Activated CD4-positive, alpha-beta T cell treated with anti-CD3 and anti-CD28 coated beads for 36 hours (primary cell): ENCODE measurements at regions of chr22 and their contacts with region 1.

Region 1: DNA sequence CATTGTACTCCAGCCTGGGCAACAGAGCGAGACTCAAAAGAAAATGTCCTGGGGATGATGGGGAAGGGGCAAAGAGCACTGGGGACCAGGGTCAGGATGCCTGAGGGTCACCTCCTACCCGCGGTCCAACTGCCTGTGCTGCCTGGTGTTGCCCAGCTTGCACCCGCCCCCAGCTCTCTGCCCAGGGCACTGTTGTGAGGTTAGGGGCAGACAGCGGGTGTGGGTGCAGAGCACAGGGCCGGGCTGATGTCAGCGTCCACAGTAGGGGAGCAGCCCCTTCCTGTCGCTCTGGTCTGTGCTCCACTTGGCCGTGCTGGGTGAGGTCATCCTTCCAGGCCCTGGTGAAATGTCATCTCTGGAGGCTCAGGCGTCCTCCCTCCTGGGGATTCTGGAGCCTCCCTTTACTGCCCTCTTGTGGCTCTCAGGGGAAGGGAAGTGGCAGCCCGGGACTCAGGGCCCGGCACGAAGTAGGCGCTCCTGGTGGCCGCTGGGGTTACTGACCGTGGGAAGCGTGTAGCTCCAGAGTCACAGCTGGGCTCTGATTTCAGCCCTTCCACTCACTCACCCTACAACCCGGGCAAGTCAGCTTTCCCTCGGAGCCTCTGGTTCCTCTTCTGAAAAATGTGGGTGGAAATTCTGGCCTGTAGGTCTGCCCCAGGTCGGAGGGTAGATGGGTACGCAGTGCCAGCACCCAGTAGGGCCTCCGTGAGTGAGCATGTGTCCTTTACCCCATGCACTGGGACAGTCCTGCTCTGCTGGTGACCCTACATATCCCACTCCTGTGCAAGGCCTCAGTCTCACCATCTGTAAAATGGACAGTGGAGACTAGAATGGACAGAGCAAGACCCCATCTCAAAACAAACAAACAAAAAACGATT is 17.3 kb upstream of the PRR5 start:
- DNase-seq: peak; percentile 94
- ATAC-seq: peak; percentile 81
- H3K4me3 Mint-ChIP-seq: peak overlapping the region; percentile 15
- H3K27ac Mint-ChIP-seq: peak overlapping the region; percentile 87
- H3K4me1 Mint-ChIP-seq: peaks cover 52% of the 10 kb centered on the region
- H3K27me3 Mint-ChIP-seq: no peaks in the 10 kb centered on the region

Region 2: GRCh38 chr22:44180706-44181032 is 504.1 kb before region 1 on chr22 and contains the start of gene PARVG:
- CTCF ChIA-PET with region 1: no interaction called
- POLR2A ChIA-PET with region 1: no interaction called
- intact Hi-C with region 1: loop called in 1 of 2 experiments (anchors 5 kb)
- DNase-seq: peak; percentile 51
- ATAC-seq: peak; percentile 35
- H3K4me3 Mint-ChIP-seq: peak within 1 kb of the TSS; percentile 86
- H3K27ac Mint-ChIP-seq: peak within 1 kb of the TSS; percentile 97
- H3K4me1 Mint-ChIP-seq: peaks cover 20% of the 10 kb centered on the region
- H3K27me3 Mint-ChIP-seq: no peaks in the 10 kb centered on the region
- total RNA-seq, gene PARVG: 61.7 to 74.3 TPM

Region 3: GRCh38 chr22:44497218-44497904 is 187.4 kb before region 1 on chr22:
- CTCF ChIA-PET with region 1: no interaction called
- POLR2A ChIA-PET with region 1: no interaction called
- intact Hi-C with region 1: loop called in 1 of 2 experiments (anchors 1 kb)
- DNase-seq: no peak
- ATAC-seq: no peak
- H3K4me3 Mint-ChIP-seq: peak overlapping the region; percentile 68
- H3K27ac Mint-ChIP-seq: peak overlapping the region; percentile 47
- H3K4me1 Mint-ChIP-seq: peaks cover 30% of the 10 kb centered on the region
- H3K27me3 Mint-ChIP-seq: no peaks in the 10 kb centered on the region

Region 4: DNA sequence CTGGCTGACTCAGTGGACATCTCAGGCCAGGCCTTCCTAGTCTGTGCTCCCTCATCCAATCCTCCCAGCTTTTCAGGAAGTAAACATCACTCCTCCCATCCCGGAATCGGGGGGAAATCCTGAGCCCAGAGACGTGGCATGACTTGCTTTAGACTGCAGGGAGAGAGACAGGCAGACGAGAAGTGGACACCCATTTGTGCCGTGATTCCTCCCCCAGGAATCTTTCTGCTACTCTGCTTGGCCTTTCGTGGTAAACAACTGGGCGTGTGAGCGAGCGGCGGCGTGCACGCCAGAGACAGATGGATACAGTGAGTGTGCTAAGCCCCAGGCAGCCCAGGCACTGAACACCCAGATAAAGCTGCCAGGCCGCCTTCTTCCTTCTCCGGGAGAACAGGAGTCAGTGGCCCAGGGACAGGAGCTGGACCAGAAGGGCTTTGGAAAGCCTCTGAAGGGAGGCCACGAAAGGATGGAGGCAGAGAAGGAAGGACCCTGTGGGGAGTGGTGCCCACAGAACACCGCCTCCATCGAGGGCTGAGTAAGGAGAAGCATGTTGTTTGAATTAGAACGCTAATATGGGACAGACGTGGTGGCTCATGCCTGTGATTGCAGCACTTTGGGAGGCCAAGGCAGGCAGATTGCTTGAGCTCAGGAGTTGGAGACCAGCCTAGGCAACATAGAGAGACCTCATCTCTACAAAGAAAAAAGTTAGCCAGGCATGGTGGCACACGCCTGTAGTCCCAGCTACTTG is 35.8 kb before region 1 on chr22:
- CTCF ChIA-PET with region 1: interaction called, 6 read pairs
- POLR2A ChIA-PET with region 1: no interaction called
- intact Hi-C with region 1: loop called in 1 of 2 experiments (anchors 1 kb)
- DNase-seq: no peak
- ATAC-seq: no peak
- H3K4me3 Mint-ChIP-seq: no peak overlapping the region
- H3K27ac Mint-ChIP-seq: no peak overlapping the region
- H3K4me1 Mint-ChIP-seq: no peaks in the 10 kb centered on the region
- H3K27me3 Mint-ChIP-seq: no peaks in the 10 kb centered on the region

Region 5: DNA sequence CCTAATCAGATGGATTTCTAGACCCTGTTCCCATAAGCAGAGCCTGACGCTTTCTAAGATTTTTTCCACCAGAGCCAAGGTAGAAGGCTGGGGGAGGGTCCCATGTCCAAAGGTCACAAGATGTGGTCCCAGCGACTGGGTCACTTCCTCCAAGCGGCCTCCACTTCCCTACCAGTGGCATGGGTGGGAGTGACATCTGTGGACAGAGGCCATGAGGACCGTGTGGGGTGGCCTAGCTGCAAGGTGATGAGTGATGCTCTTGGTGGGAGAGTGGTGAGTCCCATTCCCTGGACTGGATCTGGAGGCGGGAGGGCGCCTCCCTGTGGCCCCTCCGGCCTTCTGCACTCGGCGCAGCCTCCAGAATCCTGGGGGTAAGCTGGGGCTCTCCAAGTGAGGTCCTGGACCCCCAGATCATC is 15.2 kb before region 1 on chr22:
- CTCF ChIA-PET with region 1: interaction called, 19 read pairs
- POLR2A ChIA-PET with region 1: no interaction called
- intact Hi-C with region 1: loop called in 1 of 2 experiments (anchors 1 kb)
- DNase-seq: no peak
- ATAC-seq: no peak
- H3K4me3 Mint-ChIP-seq: peak overlapping the region; percentile 67
- H3K27ac Mint-ChIP-seq: no peak overlapping the region
- H3K4me1 Mint-ChIP-seq: peaks cover 37% of the 10 kb centered on the region
- H3K27me3 Mint-ChIP-seq: no peaks in the 10 kb centered on the region

Region 6: DNA sequence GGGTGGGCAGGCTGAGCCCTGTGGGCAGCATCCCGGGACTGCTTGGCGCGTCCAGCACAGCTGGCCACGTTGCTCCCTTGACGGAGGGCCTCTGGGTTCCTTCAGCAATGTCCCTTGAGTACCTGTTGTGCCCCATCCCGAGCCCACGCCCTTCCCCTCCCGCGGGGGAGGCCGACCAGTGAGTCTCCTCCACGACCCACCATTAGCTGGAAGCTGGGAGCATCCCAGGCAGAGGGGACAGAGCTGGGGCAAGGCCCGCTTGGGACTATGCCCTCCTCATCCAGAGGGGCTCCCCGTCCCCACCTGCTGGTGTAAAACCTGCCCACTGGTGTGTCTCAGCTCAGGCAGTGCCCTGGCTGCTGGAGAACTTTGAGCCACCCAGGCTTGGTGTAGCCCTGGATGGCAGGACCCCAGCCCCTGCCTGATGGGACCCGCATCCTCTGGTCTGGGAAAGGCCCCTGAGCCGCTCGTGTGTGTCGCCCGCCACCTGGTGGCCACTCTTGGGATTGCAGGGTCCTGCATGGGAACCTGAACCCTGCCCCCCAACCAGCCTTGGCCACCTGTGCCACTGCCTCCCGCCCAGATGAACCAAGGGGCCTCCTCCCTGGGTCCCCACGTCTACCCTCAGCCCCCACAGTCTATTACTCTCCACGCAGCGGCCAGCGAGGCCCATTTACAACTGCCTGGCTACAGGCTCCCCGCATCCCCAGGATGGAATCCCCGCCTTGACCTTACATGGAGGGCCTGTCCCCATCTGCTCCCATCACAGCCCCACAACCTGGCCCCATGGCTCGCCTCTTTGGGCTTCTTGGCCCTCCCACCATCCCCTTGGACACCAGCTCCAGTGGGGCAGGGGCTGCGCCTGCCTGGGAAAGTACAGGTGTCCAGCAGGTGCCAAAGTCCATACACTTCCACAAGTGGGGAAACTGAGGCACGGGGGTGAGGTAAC is 51.1 kb after region 1 on chr22:
- CTCF ChIA-PET with region 1: interaction called, 10 read pairs
- POLR2A ChIA-PET with region 1: no interaction called
- intact Hi-C with region 1: loop called in 1 of 2 experiments (anchors 1 kb)
- DNase-seq: peak; percentile 90
- ATAC-seq: peak; percentile 81
- H3K4me3 Mint-ChIP-seq: no peak overlapping the region
- H3K27ac Mint-ChIP-seq: no peak overlapping the region
- H3K4me1 Mint-ChIP-seq: no peaks in the 10 kb centered on the region
- H3K27me3 Mint-ChIP-seq: no peaks in the 10 kb centered on the region

Region 7: DNA sequence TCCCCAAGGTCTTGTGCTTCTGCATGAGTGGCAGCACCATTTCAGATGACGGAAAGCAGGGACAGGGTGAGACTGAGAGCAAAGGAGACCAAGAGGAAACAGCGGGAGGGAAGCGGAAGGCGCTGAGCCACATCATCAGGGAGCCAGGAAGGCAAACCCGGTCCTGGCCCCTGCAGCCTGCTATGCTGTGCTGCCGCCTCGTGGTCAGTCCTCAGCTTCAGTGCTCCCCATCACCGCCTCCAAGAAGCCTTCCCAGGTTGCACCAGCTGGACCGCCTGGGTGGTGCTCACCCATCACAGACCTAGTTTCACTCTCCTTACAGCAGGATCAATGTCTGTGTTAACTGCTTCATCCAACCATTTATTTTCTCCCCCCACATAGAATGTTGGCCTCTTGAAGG is 398.1 kb after region 1 on chr22:
- CTCF ChIA-PET with region 1: no interaction called
- POLR2A ChIA-PET with region 1: no interaction called
- intact Hi-C with region 1: loop called in 1 of 2 experiments (anchors 5 kb)
- DNase-seq: peak; percentile 62
- ATAC-seq: no peak
- H3K4me3 Mint-ChIP-seq: no peak overlapping the region
- H3K27ac Mint-ChIP-seq: no peak overlapping the region
- H3K4me1 Mint-ChIP-seq: peaks cover 22% of the 10 kb centered on the region
- H3K27me3 Mint-ChIP-seq: peaks cover 39% of the 10 kb centered on the region